Activated naive CD4-positive, alpha-beta T cell treated with anti-CD3 and anti-CD28 coated beads for 36 hours (primary cell): ENCODE measurements at regions of chr2 and their contacts with region 1.

Region 1: DNA sequence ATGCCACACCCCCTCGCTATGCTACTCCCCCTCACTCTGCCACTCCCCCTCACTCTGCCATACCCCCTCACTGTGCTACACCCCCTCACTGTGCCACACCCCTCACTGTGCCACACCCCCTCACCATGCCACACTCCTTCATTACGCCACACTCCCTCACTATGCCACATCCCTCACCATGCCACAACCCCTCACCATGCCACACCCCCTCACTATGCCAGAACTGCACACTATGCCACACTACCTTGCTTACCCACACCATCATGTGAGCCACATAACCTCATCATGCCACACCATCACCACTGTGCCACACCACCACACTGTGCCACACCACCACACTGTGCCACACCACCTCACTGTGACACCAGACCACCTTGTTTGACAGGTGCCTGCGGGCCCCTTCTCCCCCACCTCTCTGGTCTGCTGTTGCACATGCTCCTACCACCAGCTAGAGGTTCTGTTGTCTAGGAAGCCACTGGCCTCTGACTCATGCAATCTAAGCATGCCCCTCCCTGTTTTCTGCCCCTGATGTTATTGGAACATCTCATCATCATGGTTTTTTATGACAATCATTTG is 22.0 kb downstream of the MARCHF4 start:
- DNase-seq: peak; percentile 56
- H3K4me3 Mint-ChIP-seq: no peak overlapping the region
- H3K27ac Mint-ChIP-seq: peak overlapping the region; percentile 23
- H3K4me1 Mint-ChIP-seq: peaks cover 80% of the 10 kb centered on the region
- H3K27me3 Mint-ChIP-seq: no peaks in the 10 kb centered on the region

Region 2: GRCh38 chr2:216013080-216013909 is 337.0 kb before region 1 on chr2 and contains the start of gene MREG:
- CTCF ChIA-PET with region 1: no interaction called
- intact Hi-C with region 1: loop called (anchors 5 kb)
- DNase-seq: peak; percentile 91
- H3K4me3 Mint-ChIP-seq: peak within 1 kb of the TSS; percentile 81
- H3K27ac Mint-ChIP-seq: no peak within 1 kb of the TSS
- H3K4me1 Mint-ChIP-seq: peaks cover 51% of the 10 kb centered on the region
- H3K27me3 Mint-ChIP-seq: no peaks in the 10 kb centered on the region
- total RNA-seq, gene MREG: 3.1 to 3.9 TPM

Region 3: DNA sequence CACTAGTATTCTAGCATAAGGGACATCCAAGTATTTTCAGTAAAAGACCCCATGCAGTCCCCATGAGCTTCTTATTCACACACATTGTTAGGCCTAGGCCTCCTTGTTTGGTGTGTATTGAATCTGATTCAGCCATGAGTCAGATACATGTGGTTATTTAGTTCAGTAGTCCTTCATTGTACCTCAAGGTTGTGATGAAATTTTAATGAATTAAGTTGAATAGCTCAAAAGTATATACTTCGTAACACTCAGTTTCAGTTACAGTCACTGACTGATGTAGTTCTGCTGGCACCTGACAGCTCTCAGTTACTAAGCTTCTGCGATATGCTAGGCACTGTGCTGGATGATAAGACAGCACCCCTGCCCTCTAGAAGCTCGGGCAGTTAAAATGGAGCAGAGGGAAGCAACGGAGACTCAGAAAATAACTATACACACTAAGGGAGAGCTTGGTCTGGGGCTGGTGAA is 154.7 kb before region 1 on chr2:
- CTCF ChIA-PET with region 1: no interaction called
- intact Hi-C with region 1: loop called (anchors 1 kb)
- DNase-seq: peak; percentile 61
- H3K4me3 Mint-ChIP-seq: no peak overlapping the region
- H3K27ac Mint-ChIP-seq: peak overlapping the region; percentile 80
- H3K4me1 Mint-ChIP-seq: peaks cover 54% of the 10 kb centered on the region
- H3K27me3 Mint-ChIP-seq: no peaks in the 10 kb centered on the region

Region 4: GRCh38 chr2:216222650-216223352 is 127.5 kb before region 1 on chr2:
- CTCF ChIA-PET with region 1: interaction called, 3 read pairs
- intact Hi-C with region 1: loop called (anchors 1 kb)
- DNase-seq: peak; percentile 56
- H3K4me3 Mint-ChIP-seq: no peak overlapping the region
- H3K27ac Mint-ChIP-seq: peak overlapping the region; percentile 41
- H3K4me1 Mint-ChIP-seq: peaks cover 28% of the 10 kb centered on the region
- H3K27me3 Mint-ChIP-seq: no peaks in the 10 kb centered on the region

Region 5: DNA sequence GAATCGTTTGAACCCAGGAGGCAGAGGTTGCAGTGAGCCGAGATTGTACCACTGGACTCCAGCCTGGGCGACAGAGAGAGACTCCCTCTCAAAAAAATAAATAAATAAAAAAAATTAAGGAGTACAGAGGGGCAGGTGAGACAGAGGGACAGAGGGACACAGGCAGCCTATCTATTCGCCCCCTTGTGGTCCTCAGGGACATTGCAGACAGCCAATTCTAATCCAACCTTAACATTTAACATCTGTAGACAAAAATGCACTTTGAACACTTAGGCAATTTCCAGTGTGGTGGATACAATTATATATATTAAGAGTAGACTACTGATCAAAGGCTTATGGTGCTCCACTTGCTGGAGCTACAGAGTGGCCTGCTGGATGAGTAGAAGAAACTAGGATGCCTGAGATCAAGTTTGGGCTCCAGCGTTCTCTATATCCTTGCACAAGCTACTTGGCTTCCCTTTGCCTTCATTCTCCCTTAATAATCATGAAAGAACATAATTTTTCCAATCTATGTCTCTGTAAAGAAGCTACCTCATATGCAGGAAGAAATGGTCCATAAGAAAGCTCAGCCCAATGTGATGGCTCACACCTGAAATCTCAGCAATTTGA is 53.8 kb after region 1 on chr2:
- CTCF ChIA-PET with region 1: interaction called, 8 read pairs
- intact Hi-C with region 1: loop called (anchors 1 kb)
- DNase-seq: peak; percentile 71
- H3K4me3 Mint-ChIP-seq: no peak overlapping the region
- H3K27ac Mint-ChIP-seq: no peak overlapping the region
- H3K4me1 Mint-ChIP-seq: no peaks in the 10 kb centered on the region
- H3K27me3 Mint-ChIP-seq: no peaks in the 10 kb centered on the region

Region 6: GRCh38 chr2:216478151-216478550 is 127.8 kb after region 1 on chr2:
- CTCF ChIA-PET with region 1: no interaction called
- intact Hi-C with region 1: loop called (anchors 1 kb)
- DNase-seq: peak; percentile 68
- H3K4me3 Mint-ChIP-seq: no peak overlapping the region
- H3K27ac Mint-ChIP-seq: no peak overlapping the region
- H3K4me1 Mint-ChIP-seq: peaks cover 23% of the 10 kb centered on the region
- H3K27me3 Mint-ChIP-seq: no peaks in the 10 kb centered on the region

Region 7: DNA sequence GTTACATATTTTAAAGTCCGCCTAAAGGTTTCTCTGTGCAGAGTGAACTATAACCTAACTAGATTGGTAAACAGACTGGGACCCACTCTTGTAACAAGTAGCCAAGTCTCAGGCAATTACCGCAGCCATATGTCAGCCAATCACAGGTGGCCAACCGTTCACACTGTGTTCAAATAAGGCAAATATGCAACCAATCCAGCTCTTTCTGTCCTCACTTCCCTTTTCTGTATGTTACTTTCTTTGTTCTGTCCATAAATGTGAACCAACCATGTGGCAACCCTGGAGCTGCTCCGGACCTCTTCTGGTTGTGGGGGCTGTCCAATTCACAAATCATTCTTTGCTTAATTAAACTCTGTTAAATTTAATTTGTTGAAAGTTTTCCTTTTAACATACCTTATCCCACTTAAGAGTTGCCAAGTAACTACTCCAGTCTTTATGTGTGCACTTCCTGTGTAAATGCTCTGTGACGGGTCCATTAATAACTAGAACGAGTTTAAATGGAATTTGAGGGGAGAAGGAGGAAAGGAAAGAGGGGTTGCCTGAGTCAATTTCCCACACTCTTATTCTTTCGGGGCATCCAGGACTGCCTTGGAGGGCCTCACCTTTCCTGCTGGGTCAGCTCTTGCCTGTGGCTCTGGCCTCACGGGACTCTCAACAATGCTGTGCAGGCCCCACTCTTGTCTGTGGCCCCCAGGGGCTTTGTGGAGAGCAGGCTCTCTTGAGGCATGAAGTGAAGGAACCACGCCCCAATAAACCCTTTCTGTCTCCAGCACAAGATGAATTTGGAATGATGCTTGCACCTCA is 141.7 kb after region 1 on chr2:
- CTCF ChIA-PET with region 1: no interaction called
- intact Hi-C with region 1: no loop called
- DNase-seq: no peak
- H3K4me3 Mint-ChIP-seq: no peak overlapping the region
- H3K27ac Mint-ChIP-seq: no peak overlapping the region
- H3K4me1 Mint-ChIP-seq: peaks cover 5% of the 10 kb centered on the region
- H3K27me3 Mint-ChIP-seq: no peaks in the 10 kb centered on the region

Region 8: GRCh38 chr2:216827073-216827720 is 476.9 kb after region 1 on chr2:
- CTCF ChIA-PET with region 1: no interaction called
- intact Hi-C with region 1: no loop called
- DNase-seq: no peak
- H3K4me3 Mint-ChIP-seq: no peak overlapping the region
- H3K27ac Mint-ChIP-seq: no peak overlapping the region
- H3K4me1 Mint-ChIP-seq: no peaks in the 10 kb centered on the region
- H3K27me3 Mint-ChIP-seq: peaks cover 10% of the 10 kb centered on the region

Region 9: DNA sequence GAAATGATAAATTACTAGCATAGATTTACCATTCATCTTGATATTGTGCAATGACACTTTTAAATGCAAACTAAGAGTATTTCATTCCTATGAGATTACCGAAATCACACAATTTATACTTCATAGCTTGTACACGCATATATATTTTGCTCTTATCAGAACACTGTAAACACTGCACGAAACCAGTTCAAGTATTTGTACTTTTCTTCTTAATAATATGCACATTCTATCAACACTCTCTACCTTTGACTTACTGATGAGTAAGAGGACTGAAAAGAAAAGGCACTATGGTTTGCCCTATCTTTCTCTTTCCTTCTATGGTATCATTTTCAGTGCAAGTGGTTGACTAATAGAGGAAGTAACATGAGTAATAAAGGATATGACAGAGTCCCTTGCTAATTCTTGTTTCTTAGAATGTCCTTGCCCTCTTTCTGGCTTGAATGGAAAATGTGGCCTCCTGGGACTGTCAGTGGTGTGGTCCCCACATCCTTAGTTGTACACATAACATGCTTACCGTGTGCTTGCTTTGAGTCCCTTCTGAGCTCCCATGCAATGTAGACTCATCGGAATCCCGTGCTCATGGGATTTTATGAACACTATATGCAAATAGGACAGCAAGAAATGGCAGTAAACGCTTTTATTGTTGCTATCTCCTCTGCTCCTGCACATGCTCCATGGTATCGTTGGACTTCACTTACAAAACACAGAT is 873.1 kb after region 1 on chr2:
- CTCF ChIA-PET with region 1: no interaction called
- intact Hi-C with region 1: loop called (anchors 5 kb)
- DNase-seq: peak; percentile 78
- H3K4me3 Mint-ChIP-seq: no peak overlapping the region
- H3K27ac Mint-ChIP-seq: peak overlapping the region; percentile 59
- H3K4me1 Mint-ChIP-seq: peaks cover 29% of the 10 kb centered on the region
- H3K27me3 Mint-ChIP-seq: peaks cover 28% of the 10 kb centered on the region